ENCODE measurements at regions of chr13 and their contacts with region 1.

Region 1: DNA sequence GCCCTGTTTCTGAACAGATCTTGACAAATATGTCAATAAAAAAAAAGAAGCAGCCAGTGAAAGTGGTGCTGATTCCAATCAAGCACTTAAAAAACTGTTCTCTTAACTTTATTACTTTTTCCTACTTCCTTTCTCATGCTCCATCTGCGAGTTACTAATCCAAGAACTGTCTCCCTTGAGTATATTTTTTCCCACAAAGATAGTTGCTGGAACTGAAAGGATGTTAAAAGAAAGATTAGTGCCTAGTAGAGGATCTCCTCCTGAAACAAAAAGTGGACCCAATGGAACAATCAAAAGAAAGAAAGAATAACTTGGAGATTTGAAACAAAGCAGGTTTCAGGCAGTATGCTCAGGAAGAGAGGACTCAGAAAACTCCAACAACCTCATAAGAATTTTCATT is 1034.8 kb downstream of the PCDH17 start:
- DNase-seq: no peak
- ATAC-seq: no peak
- H3K4me3 Mint-ChIP-seq: no peak overlapping the region
- H3K27ac Mint-ChIP-seq: no peak overlapping the region
- H3K4me1 Mint-ChIP-seq: no peaks in the 10 kb centered on the region
- H3K27me3 Mint-ChIP-seq: no peaks in the 10 kb centered on the region

Region 2: DNA sequence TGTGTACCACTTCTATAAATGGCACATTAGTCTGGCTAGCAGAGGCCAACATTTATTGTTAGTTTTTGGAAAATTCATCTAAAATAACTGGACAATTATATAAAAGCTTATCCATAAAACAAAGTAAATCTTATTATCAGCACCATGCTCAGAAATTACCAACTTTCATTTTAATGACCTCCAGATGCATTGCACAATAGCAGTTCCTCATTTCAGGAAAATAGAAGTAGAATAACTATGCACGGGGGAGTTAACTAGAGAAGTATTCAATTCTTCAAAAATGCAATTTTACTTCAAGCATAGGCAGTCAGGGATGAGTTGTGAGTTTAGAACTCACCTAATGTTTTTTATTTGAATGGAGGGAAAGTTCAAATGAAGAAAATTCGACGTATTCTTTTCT is 11.2 kb before region 1 on chr13:
- CTCF ChIA-PET with region 1: no interaction called
- POLR2A ChIA-PET with region 1: no interaction called
- intact Hi-C with region 1: no loop called
- DNase-seq: no peak
- ATAC-seq: no peak
- H3K4me3 Mint-ChIP-seq: no peak overlapping the region
- H3K27ac Mint-ChIP-seq: no peak overlapping the region
- H3K4me1 Mint-ChIP-seq: no peaks in the 10 kb centered on the region
- H3K27me3 Mint-ChIP-seq: no peaks in the 10 kb centered on the region

Region 3: DNA sequence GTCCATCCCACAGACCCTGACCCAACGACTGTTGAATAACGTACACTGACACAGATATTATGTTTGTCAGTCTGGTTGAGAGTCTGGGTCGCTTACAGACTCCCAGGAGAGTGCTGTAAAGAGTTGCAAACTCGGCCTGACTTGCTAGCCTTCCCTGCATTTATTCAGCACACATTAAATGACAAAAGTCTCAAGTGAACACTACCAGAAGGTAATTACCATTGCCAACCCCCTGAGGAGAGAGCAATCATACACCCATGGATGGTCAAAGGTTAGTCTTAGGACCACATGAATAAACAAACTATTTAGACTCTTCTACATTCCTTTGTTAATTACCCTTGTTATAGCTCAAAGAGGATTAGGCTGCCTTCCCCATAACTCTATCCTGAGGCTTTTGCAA is 13.8 kb after region 1 on chr13:
- CTCF ChIA-PET with region 1: no interaction called
- POLR2A ChIA-PET with region 1: no interaction called
- intact Hi-C with region 1: loop called in 1 of 2 experiments (anchors 1 kb)
- DNase-seq: no peak
- ATAC-seq: no peak
- H3K4me3 Mint-ChIP-seq: no peak overlapping the region
- H3K27ac Mint-ChIP-seq: no peak overlapping the region
- H3K4me1 Mint-ChIP-seq: no peaks in the 10 kb centered on the region
- H3K27me3 Mint-ChIP-seq: no peaks in the 10 kb centered on the region

Measured in activated CD4-positive, alpha-beta T cell treated with anti-CD3 and anti-CD28 coated beads for 36 hours (primary cell).